Mammary epithelial cell (primary cell): ENCODE measurements at regions of chr16 and their contacts with region 1.

Region 1: GRCh38 chr16:83215406-83216001 is 588.7 kb downstream of the CDH13 start:
- DNase-seq: peak; percentile 24
- H3K4me3 ChIP-seq: no peak overlapping the region
- H3K27ac ChIP-seq: no peak overlapping the region
- H3K4me1 ChIP-seq: no peaks in the 10 kb centered on the region
- H3K27me3 ChIP-seq: no peaks in the 10 kb centered on the region
- CTCF ChIP-seq: peak; percentile 79 to 83

Region 2: DNA sequence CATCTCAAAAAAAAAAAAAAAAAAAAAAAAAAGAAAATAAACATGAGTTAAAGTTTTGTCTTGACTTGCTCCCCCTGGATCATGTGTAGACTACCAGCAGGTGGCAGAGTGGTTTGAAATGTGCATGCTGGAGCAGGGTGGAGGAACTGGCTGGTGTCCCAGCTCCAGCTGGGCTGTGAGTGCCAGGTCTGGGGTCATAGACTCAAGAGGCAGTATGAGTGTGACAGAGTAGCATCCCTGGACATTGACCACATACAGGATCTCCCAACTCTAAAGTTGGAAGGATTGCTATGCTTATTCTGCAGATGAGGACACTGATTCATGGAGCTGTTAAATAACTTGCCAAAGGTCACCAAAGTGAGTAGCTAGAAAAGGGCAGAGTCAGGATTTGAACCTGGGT is 847.5 kb before region 1 on chr16:
- CTCF ChIA-PET with region 1: interaction called, 11 read pairs
- dilution Hi-C with region 1: no loop called
- in situ Hi-C with region 1: no loop called
- intact Hi-C with region 1: no loop called
- DNase-seq: peak; percentile 12
- H3K4me3 ChIP-seq: no peak overlapping the region
- H3K27ac ChIP-seq: no peak overlapping the region
- H3K4me1 ChIP-seq: no peaks in the 10 kb centered on the region
- H3K27me3 ChIP-seq: peaks cover 7% of the 10 kb centered on the region
- CTCF ChIP-seq: peak; percentile 43 to 57

Region 3: DNA sequence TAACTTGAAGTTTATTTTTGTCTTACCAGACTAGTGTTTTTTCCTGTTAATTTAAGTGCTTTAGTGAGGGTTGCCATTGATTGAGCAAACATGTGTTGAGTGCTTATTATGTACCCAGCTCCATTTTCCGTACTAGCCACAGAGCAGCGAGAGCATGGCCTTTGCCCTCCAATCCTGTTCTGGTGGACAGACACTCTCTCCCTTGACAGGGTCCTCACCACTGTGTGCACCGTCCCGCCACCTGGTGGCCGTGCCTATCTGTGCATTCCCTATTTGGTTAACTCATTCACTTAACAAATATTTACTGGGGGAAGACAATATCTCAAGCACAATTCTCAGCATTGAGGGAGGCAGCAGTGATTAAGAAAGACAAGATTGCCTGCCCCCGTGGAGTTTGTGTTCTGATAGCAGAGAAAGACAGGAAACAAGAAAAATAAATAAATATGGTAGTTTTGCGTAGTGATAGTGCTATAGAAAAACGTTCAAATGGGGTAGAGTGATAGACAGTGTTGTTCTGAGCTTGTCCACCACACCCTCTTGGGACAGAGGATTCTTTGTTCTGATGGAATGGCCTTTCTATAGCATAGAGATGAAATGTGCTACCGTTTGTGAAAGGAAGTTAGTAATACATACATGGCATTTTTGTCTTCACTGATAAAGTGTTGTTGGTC is 575.7 kb before region 1 on chr16:
- CTCF ChIA-PET with region 1: interaction called, 3 read pairs
- dilution Hi-C with region 1: no loop called
- in situ Hi-C with region 1: loop called in 1 of 2 experiments (anchors 25 kb)
- intact Hi-C with region 1: no loop called
- DNase-seq: peak; percentile 67
- H3K4me3 ChIP-seq: no peak overlapping the region
- H3K27ac ChIP-seq: peak overlapping the region; percentile 75
- H3K4me1 ChIP-seq: peaks cover 62% of the 10 kb centered on the region
- H3K27me3 ChIP-seq: no peaks in the 10 kb centered on the region
- CTCF ChIP-seq: peak; percentile 86 to 94

Region 4: GRCh38 chr16:83113317-83113716 is 102.2 kb before region 1 on chr16:
- CTCF ChIA-PET with region 1: no interaction called
- dilution Hi-C with region 1: no loop called
- in situ Hi-C with region 1: no loop called
- intact Hi-C with region 1: loop called (anchors 10 kb)
- DNase-seq: no peak
- H3K4me3 ChIP-seq: no peak overlapping the region
- H3K27ac ChIP-seq: no peak overlapping the region
- H3K4me1 ChIP-seq: no peaks in the 10 kb centered on the region
- H3K27me3 ChIP-seq: no peaks in the 10 kb centered on the region
- CTCF ChIP-seq: peak; percentile 47 to 56

Region 5: GRCh38 chr16:83176802-83177201 is 38.7 kb before region 1 on chr16:
- CTCF ChIA-PET with region 1: no interaction called
- dilution Hi-C with region 1: no loop called
- in situ Hi-C with region 1: no loop called
- intact Hi-C with region 1: no loop called
- DNase-seq: no peak
- H3K4me3 ChIP-seq: no peak overlapping the region
- H3K27ac ChIP-seq: no peak overlapping the region
- H3K4me1 ChIP-seq: no peaks in the 10 kb centered on the region
- H3K27me3 ChIP-seq: no peaks in the 10 kb centered on the region
- CTCF ChIP-seq: no peak